Lower leg skin (tissue), 4 donors: ENCODE measurements at regions of chr3 and their contacts with region 1.

Region 1: GRCh38 chr3:152524198-152525140 is 255.7 kb downstream of the MBNL1 start:
- DNase-seq: peak in 1 of 2 donors; percentile 68
- H3K4me3 ChIP-seq: no peak overlapping the region
- CTCF ChIP-seq: no peak
- POLR2A ChIP-seq: no peak

Region 2: GRCh38 chr3:152486364-152486763 is 38.1 kb before region 1 on chr3:
- intact Hi-C with region 1: loop called (anchors 1 kb)
- DNase-seq: no peak
- H3K4me3 ChIP-seq: no peak overlapping the region
- CTCF ChIP-seq: no peak
- POLR2A ChIP-seq: no peak

Region 3: GRCh38 chr3:152650177-152650576 is 125.7 kb after region 1 on chr3:
- intact Hi-C with region 1: no loop called
- DNase-seq: no peak
- H3K4me3 ChIP-seq: no peak overlapping the region
- CTCF ChIP-seq: no peak
- POLR2A ChIP-seq: no peak

Region 4: GRCh38 chr3:152825566-152825965 is 301.1 kb after region 1 on chr3:
- intact Hi-C with region 1: no loop called
- DNase-seq: no peak
- H3K4me3 ChIP-seq: no peak overlapping the region
- CTCF ChIP-seq: no peak
- POLR2A ChIP-seq: no peak